Pancreas (tissue), 10 donors: ENCODE measurements at regions of chr4 and their contacts with region 1.

Region 1: GRCh38 chr4:162497564-162498167 is 333.9 kb upstream of the FSTL5 start:
- DNase-seq: peak in 1 of 6 donors; percentile 19
- ATAC-seq: peak; percentile 93 to 99 (median 95)
- H3K4me3 ChIP-seq: peak overlapping the region in 2 of 4 donors; percentile 15 to 22
- H3K27ac ChIP-seq: no peak overlapping the region
- H3K4me1 ChIP-seq: no peaks in the 10 kb centered on the region
- H3K27me3 ChIP-seq: no peaks in the 10 kb centered on the region
- CTCF ChIP-seq: peak; percentile 41 to 69 (median 55)

Region 2: DNA sequence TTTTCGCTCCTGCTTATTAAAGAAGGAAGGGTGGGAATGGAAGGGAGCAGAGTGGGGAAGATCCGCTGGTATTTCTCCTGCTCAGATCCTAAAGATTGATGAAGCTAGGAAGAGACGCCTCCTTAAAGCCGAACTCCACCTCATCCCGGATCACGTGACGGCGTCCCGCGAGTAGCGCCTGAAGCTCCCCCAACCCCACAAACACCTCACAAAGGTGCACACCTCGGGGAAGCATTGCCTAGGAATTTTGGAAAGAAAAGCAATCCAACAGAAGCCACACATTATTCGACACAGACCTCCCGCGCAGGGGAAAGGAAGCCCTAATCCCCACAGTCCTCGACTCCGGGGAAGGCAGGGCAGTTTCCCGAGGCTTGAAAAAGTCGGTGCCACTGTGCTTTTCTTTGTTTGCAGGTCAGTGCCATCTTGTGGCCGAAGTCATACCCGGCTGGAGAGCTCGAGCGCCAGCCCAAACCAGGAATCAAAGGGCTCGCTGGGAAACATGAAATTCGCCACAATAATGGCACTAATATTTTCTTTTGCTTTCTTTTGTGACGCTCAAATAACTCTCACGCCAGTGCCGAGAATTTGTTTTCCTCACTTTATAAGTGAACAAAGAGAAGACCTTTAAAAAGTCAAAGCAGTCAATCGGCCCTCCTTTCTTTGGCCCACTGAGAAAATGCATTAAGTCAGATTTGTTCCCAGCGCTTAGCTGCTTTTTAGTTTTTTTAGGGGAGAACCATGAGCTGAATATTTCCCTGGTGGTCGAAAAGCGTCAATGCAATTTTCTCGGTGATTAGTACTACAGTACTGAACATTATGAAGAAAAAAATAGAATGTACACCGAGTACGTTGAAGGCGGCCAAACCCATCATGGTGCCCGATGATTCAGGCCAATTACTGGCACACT is 835.1 kb after region 1 on chr4 and contains the start of gene NPY1R:
- intact Hi-C with region 1: loop called in 2 of 3 experiments (anchors 10 kb)
- DNase-seq: peak; percentile 64 to 80 (median 74)
- ATAC-seq: peak; percentile 90 to 97 (median 96)
- H3K4me3 ChIP-seq: peak within 1 kb of the TSS; percentile 40 to 55 (median 48)
- H3K27ac ChIP-seq: peak within 1 kb of the TSS in 2 of 4 donors; percentile 50 to 67
- H3K4me1 ChIP-seq: no peaks in the 10 kb centered on the region
- H3K27me3 ChIP-seq: no peaks in the 10 kb centered on the region
- CTCF ChIP-seq: peak; percentile 28 to 58 (median 44)
- total RNA-seq, gene NPY1R: 2.4 to 8.5 (median 3.8) TPM